K562 (cell line): ENCODE measurements at regions of chr1 and their contacts with region 1.

Region 1: GRCh38 chr1:40951943-40952743 is 27.4 kb upstream of the CTPS1 start:
- DNase-seq: peak; percentile 80 to 88 (median 86)
- ATAC-seq: peak; percentile 88
- H3K4me3 ChIP-seq: no peak overlapping the region
- H3K27ac ChIP-seq: no peak overlapping the region
- H3K4me1 ChIP-seq: peaks cover 5 to 12% of the 10 kb centered on the region in 2 experiments; a peak in 4 of 5 replicates
- H3K27me3 ChIP-seq: peaks cover 5 to 10% of the 10 kb centered on the region in 2 experiments; a peak in 3 of 5 replicates
- CTCF ChIP-seq: peak; percentile 96 to 98 (median 98)
- EP300 ChIP-seq: no peak
- POLR2A ChIP-seq: no peak
- RAD21 ChIP-seq: peak; percentile 98 to 100

Region 2: DNA sequence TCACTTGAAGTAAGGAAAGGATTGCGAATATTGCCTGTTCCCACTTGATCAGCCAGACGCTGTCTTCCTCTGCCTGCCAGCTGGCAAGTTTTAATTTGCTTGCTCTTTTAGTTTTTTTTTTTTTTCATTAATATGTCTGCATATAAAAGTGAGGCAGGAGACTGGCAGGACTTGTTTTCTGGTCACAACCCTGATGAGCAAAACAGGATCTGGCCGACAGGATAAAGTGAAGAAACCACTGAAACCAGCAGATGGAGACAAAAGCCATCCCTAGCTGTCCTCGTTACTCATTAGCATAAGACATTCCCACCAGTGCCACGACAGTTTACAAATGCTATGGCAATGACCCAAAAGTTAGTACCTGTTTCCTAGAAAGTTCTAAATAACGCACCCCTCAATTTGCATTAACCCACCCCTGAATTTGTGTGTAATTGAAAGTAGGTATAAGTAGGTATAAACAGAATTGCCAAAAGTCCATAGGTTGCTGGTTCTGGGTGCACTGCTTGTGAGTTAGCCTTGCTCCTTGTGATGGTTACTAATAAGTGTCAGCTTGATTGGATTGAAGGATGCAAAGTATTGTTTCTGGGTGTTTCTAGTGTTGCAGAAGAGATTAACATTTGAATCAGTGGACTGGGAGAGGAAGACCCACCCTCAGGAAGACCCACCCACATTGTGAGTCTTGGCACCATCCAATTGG is 359.9 kb before region 1 on chr1:
- CTCF ChIA-PET with region 1: interaction called, 3 read pairs
- POLR2A ChIA-PET with region 1: no interaction called
- in situ Hi-C with region 1: no loop called
- intact Hi-C with region 1: loop called (anchors 1 kb)
- DNase-seq: peak in 2 of 4 experiments; percentile 44 to 73
- ATAC-seq: peak; percentile 93
- H3K4me3 ChIP-seq: no peak overlapping the region
- H3K27ac ChIP-seq: no peak overlapping the region
- H3K4me1 ChIP-seq: 0 out of 5 replicates have a peak, but pooled peaks cover 0 to 3% of the 10 kb centered on the region in 2 experiments
- H3K27me3 ChIP-seq: peaks cover under 1 to 3% of the 10 kb centered on the region in 2 experiments; a peak in 2 of 5 replicates
- CTCF ChIP-seq: peak; percentile 76 to 82 (median 76)
- EP300 ChIP-seq: no peak
- POLR2A ChIP-seq: no peak
- RAD21 ChIP-seq: peak; percentile 55 to 83

Region 3: DNA sequence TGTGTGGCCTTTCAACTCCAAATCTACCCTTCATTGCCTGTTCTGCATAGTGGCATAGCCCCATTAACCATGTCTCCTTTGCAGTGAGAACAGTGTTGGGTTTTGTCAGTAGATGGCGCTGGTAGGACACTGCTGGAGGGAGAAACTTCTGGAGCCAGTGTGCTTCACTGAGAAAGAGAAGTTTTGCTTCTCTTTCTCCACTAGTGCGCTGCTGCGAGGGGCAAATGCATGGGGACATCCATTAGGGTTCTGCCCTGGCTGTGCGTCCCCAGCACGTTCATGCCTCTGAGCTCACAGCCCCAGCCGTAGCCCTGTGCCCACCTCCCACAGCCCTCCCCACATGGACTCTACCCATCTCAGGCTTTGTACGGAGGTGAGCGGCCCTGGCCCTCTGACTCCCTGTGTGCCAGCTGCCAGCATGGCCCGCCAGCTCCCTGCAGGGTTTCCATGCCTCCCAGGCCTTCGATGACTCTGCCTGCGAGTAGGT is 339.8 kb before region 1 on chr1:
- CTCF ChIA-PET with region 1: interaction called, 4 read pairs
- POLR2A ChIA-PET with region 1: no interaction called
- in situ Hi-C with region 1: loop called (anchors 5 kb)
- intact Hi-C with region 1: loop called (anchors 5 kb)
- DNase-seq: peak; percentile 74 to 83 (median 79)
- ATAC-seq: peak; percentile 99
- H3K4me3 ChIP-seq: no peak overlapping the region
- H3K27ac ChIP-seq: no peak overlapping the region
- H3K4me1 ChIP-seq: peaks cover 0 to 4% of the 10 kb centered on the region in 2 experiments; a peak in 2 of 5 replicates
- H3K27me3 ChIP-seq: peaks cover 0 to 14% of the 10 kb centered on the region in 2 experiments; a peak in 3 of 5 replicates
- CTCF ChIP-seq: peak; percentile 92 to 96 (median 94)
- EP300 ChIP-seq: no peak
- POLR2A ChIP-seq: no peak
- RAD21 ChIP-seq: peak; percentile 90 to 97

Region 4: GRCh38 chr1:40774266-40774998 is 177.7 kb before region 1 on chr1:
- CTCF ChIA-PET with region 1: interaction called, 10 read pairs
- POLR2A ChIA-PET with region 1: interaction called, 6 read pairs
- in situ Hi-C with region 1: loop called (anchors 5 kb)
- intact Hi-C with region 1: loop called (anchors 1 kb)
- DNase-seq: peak; percentile 77 to 87 (median 82)
- ATAC-seq: peak; percentile 96
- H3K4me3 ChIP-seq: no peak overlapping the region
- H3K27ac ChIP-seq: peak overlapping the region; percentile 49
- H3K4me1 ChIP-seq: peaks cover 0 to 14% of the 10 kb centered on the region in 2 experiments; a peak in 4 of 5 replicates
- H3K27me3 ChIP-seq: no peaks in the 10 kb centered on the region
- CTCF ChIP-seq: peak; percentile 93 to 98 (median 94)
- EP300 ChIP-seq: peak; percentile 51; the same call in 1 of the 2 replicates
- POLR2A ChIP-seq: no peak
- RAD21 ChIP-seq: peak; percentile 90 to 94

Region 5: DNA sequence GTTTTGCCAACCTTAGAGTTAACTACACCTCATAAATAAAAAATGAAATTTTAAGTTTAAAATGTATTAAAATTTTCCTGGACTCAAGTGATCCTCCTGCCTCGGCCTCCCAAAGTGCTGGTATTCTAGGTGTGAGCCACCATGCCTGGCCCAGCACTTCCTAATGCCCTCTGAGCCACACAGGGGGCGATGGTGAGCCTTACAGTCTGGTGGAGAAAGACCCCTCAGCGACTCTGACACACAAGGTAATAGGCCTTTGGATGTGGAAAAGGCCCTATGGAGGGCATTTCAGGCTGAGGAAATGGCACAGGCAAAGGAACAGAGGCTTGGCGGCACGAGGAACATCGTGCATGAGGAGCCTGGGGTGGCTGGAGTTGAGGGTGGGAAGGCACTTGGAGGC is 96.6 kb before region 1 on chr1:
- CTCF ChIA-PET with region 1: interaction called, 120 read pairs
- POLR2A ChIA-PET with region 1: interaction called, 9 read pairs
- in situ Hi-C with region 1: loop called (anchors 5 kb)
- intact Hi-C with region 1: no loop called
- DNase-seq: no peak
- ATAC-seq: peak; percentile 67
- H3K4me3 ChIP-seq: no peak overlapping the region
- H3K27ac ChIP-seq: no peak overlapping the region
- H3K4me1 ChIP-seq: no peaks in the 10 kb centered on the region; a peak in 2 of 5 replicates
- H3K27me3 ChIP-seq: peaks cover 0 to 2% of the 10 kb centered on the region in 2 experiments; a peak in 1 of 5 replicates
- CTCF ChIP-seq: peak; percentile 53 to 68 (median 55)
- EP300 ChIP-seq: no peak
- POLR2A ChIP-seq: no peak
- RAD21 ChIP-seq: peak; percentile 11 to 46; a peak in 2 of 4 replicates

Region 6: DNA sequence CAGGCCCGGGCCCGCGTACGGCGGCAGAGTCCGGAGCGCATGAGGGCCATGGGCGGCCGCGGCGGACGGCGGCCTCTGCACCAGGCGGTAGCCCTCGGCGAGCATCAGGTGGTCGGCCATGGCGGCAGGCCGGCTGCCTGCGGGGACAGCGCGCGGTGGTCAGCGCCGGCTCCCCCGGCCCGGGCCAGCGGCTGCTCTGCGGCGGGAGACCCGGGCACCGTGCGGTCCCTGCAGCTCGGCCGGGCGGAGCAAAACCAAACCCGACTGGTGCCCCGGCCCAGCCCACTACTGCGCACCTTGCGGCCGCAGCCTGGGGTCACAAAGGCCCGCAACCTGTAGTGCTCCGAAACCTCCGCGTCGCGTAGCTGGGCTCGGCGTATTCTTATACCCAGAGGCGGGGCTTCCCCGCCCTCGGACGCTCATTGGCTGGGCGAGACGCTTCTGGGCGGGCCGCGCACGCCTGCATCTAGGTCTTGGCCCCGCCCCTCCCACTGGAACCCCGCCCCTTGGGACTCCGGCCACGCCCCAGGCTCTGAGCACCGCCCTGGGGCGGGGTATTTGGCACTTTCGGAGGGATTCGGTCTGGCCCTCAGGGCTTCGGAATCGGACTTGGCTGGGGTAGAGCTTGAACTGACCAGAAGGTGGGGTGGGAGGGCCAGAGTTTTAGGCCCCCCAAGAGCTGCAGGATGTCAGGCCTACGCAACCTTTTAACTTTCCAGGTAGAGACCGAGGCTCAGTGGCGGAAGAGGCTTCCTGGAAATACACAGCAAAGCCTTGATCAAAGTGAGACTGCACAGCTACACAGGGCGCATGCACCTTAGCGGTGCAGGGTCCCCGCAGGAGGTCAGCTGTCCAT is 89.9 kb before region 1 on chr1 and contains the start of gene CITED4:
- CTCF ChIA-PET with region 1: interaction called, 19 read pairs
- POLR2A ChIA-PET with region 1: interaction called, 22 read pairs
- in situ Hi-C with region 1: loop called (anchors 5 kb)
- intact Hi-C with region 1: loop called (anchors 1 kb)
- DNase-seq: peak; percentile 97 to 99 (median 99)
- ATAC-seq: peak; percentile 95
- H3K4me3 ChIP-seq: peak within 1 kb of the TSS; percentile 45
- H3K27ac ChIP-seq: peak within 1 kb of the TSS; percentile 52
- H3K4me1 ChIP-seq: peaks cover 32 to 58% of the 10 kb centered on the region in 2 experiments
- H3K27me3 ChIP-seq: peaks cover 0 to 2% of the 10 kb centered on the region in 2 experiments; a peak in 1 of 5 replicates
- CTCF ChIP-seq: peak; percentile 79 to 95 (median 85)
- EP300 ChIP-seq: peak; percentile 35; the same call in 1 of the 2 replicates
- POLR2A ChIP-seq: peak; percentile 60
- RAD21 ChIP-seq: peak; percentile 87 to 96
- polyA plus RNA-seq, gene CITED4: not detected

Region 7: DNA sequence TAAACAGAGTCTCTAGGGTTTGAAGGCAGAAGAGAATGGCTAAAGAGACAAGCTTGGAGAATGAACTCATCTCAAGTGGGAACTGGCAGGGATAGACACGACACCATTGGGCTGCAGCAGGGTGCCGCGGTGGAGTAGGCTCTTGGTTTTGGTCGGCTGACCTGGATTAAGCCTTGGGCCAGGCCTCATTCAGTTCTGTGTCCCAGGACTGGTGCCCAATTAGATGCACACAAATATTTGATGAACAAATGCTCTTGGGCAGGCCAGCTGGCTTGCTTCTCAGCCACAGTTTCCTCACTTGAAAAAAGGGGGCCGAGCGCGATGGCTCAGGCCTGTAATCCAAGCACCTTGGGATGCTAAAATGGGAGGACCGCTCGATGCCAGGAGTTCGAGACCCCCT is 36.6 kb before region 1 on chr1:
- CTCF ChIA-PET with region 1: no interaction called
- POLR2A ChIA-PET with region 1: no interaction called
- in situ Hi-C with region 1: no loop called
- intact Hi-C with region 1: no loop called
- DNase-seq: no peak
- ATAC-seq: peak; percentile 9
- H3K4me3 ChIP-seq: no peak overlapping the region
- H3K27ac ChIP-seq: no peak overlapping the region
- H3K4me1 ChIP-seq: peaks cover 0 to 8% of the 10 kb centered on the region in 2 experiments; a peak in 3 of 5 replicates
- H3K27me3 ChIP-seq: no peaks in the 10 kb centered on the region
- CTCF ChIP-seq: no peak
- EP300 ChIP-seq: no peak
- POLR2A ChIP-seq: no peak
- RAD21 ChIP-seq: no peak

Region 8: DNA sequence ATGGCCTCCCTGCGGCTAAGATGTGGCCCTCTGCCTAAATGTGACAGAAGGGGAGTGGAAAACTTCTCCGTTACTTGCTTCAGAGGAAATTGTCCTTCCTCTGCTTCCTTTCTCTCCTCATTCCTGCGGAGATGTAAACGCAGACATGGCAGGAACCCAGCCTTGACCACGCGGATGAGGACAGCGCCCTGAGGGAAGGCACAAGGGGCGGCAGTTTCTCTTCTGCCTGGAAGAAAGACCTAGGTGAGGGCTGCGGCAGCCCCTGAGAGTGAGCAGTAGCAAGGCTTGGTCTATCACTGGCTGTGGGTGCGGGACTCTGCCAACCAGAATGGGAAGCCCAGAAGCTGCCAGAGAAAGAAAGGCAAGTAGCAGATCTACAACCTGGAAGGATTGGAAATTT is 13.4 kb after region 1 on chr1:
- CTCF ChIA-PET with region 1: no interaction called
- POLR2A ChIA-PET with region 1: interaction called, 15 read pairs
- in situ Hi-C with region 1: no loop called
- intact Hi-C with region 1: no loop called
- DNase-seq: no peak
- ATAC-seq: peak; percentile 43; the same call in 2 of the 3 replicates
- H3K4me3 ChIP-seq: no peak overlapping the region
- H3K27ac ChIP-seq: no peak overlapping the region
- H3K4me1 ChIP-seq: no peaks in the 10 kb centered on the region
- H3K27me3 ChIP-seq: peaks cover 26 to 27% of the 10 kb centered on the region in 2 experiments
- CTCF ChIP-seq: no peak
- EP300 ChIP-seq: no peak
- POLR2A ChIP-seq: no peak
- RAD21 ChIP-seq: no peak